Activated B cell treated with CpG ODN at 0.5 μM for 24 hours (primary cell): ENCODE measurements at regions of chr14 and their contacts with region 1.

Region 1: GRCh38 chr14:91185721-91186120 is 58.8 kb downstream of the GPR68 start:
- DNase-seq: no peak
- ATAC-seq: no peak
- H3K4me3 Mint-ChIP-seq: no peak overlapping the region
- H3K27ac Mint-ChIP-seq: no peak overlapping the region
- H3K4me1 Mint-ChIP-seq: no peaks in the 10 kb centered on the region
- H3K27me3 Mint-ChIP-seq: no peaks in the 10 kb centered on the region
- CTCF ChIP-seq: no peak

Region 2: DNA sequence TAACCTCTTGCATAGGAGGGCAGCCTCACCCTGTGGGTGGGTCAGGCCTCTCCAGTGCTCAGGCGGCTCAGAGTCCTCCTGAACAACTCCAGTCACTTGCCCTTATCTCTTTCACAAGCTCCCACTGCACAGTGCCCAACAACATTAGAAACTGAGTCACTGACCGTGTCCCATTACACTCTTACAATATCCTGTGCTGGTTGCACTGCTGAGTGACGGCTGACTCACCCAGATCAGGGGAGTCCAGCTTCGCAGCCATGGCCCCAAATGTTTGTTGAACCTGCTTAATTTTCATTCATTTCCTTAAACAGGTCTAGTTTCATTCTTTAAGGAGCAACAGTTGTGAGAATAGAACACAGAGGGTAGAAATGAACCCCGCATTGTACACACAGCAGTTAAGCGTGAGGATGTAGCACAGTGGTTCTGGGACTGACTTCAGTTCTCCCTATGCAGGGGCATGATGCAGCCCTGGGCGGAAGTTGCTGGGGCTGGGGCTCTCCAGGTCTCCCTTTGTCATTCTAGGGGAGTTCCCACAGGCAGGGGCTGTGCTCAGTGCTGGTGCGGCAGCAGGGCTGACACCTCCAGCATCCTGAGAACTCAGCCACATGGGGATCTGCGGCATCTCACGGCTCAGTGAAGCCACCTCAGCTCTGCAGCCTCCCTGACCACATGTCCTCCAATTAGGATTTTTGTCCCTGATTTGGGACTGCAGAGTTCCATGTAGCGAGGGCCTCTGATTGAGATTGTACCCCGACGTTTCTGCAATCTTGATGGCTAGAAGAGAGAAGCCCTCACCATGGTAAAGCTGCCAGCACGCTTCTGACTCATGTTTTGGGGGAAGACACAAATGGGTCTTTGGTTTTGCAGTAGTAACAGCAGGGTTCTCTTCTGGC is 42.6 kb after region 1 on chr14:
- CTCF ChIA-PET with region 1: no interaction called
- POLR2A ChIA-PET with region 1: no interaction called
- intact Hi-C with region 1: no loop called
- DNase-seq: peak; percentile 53
- ATAC-seq: peak; percentile 88
- H3K4me3 Mint-ChIP-seq: peak overlapping the region; percentile 63
- H3K27ac Mint-ChIP-seq: peak overlapping the region; percentile 89
- H3K4me1 Mint-ChIP-seq: peaks cover 71% of the 10 kb centered on the region
- H3K27me3 Mint-ChIP-seq: no peaks in the 10 kb centered on the region
- CTCF ChIP-seq: no peak

Region 3: GRCh38 chr14:91293281-91293680 is 107.6 kb after region 1 on chr14:
- CTCF ChIA-PET with region 1: no interaction called
- POLR2A ChIA-PET with region 1: interaction called, 10 read pairs
- intact Hi-C with region 1: no loop called
- DNase-seq: no peak
- ATAC-seq: no peak
- H3K4me3 Mint-ChIP-seq: no peak overlapping the region
- H3K27ac Mint-ChIP-seq: peak overlapping the region; percentile 37
- H3K4me1 Mint-ChIP-seq: no peaks in the 10 kb centered on the region
- H3K27me3 Mint-ChIP-seq: no peaks in the 10 kb centered on the region
- CTCF ChIP-seq: no peak

Region 4: DNA sequence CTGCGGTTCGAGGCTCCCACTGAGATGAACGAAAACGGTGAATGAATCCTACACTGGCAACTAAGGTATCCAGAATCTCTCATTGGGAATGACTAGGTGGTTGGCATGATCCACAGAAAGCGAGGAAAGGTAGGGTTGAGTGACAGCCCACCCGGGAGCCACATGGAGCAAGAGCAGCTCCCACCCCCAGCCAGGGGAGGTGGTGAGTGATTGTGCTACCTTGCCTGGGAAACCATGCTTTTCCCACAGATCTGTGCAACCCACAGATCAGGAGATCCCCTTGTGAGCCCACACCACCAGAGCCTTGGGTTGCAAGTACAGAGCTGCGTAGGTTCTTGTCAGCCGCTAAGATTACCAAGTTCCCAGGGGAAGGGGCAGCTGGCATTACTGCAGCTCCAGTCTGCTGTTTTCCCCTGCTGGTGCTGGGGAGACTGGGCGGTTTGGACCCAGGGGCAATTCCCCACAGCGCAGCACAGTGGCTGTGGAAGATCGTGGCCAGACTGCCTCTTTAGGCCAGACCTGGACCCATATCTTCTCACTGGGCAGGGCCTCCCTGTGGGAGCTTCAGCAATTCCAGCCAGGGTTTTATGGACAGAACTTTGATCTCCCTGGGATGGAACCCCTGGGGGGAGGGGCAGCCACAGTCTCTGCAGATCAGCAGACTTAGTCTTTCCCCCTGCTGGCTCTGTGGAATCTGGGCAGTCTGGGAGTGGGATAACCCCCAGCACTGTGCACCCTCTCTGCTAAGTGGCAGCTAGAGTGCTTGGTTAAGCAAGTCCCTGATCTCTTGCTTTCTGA is 369.0 kb after region 1 on chr14:
- CTCF ChIA-PET with region 1: no interaction called
- POLR2A ChIA-PET with region 1: no interaction called
- intact Hi-C with region 1: no loop called
- DNase-seq: no peak
- ATAC-seq: no peak
- H3K4me3 Mint-ChIP-seq: no peak overlapping the region
- H3K27ac Mint-ChIP-seq: no peak overlapping the region
- H3K4me1 Mint-ChIP-seq: no peaks in the 10 kb centered on the region
- H3K27me3 Mint-ChIP-seq: peaks cover 12% of the 10 kb centered on the region
- CTCF ChIP-seq: no peak